Endothelial cell of umbilical vein (primary cell): ENCODE measurements at regions of chr10 and their contacts with region 1.

Region 1: DNA sequence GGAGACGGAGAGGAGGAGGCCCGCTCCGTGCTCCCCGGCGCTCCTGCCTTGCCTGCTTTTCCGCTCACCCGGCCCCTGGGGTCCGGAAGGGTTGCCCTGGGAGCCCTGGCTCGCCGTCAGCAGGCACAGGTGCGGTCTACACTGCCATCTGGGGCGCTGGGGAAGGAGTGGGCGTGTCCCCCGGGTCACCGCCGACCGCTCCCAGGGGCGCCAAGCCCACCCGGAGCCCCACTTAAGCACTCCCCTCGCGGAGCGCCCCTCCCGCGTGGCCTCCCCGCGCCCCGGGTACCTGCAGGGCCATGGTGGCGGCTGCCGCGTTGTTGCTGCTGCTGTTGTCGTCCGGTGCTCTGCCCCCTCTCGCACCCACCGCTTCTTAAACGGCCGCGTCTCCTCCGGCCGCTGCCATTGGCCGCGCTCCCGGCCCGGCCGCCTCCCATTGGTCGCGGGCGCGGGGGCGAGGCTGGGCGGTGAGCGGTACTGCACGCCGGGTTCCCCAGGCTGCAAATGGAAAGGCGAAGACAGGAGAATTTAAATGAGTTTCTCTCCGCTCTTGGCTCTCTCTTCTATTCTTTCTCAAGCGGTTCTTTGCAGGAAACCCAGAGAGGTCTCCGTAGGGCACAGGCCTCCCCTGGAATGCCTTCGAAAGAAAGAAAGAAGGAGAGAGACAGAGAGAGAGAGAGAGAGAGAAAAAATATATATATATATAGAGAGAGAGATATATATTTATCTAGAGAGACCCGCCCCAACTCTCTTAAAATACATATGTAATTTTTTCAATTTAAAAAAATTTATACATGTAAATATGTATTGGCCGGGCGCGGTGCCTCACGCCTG is at the start of gene ACBD7:
- DNase-seq: peak; percentile 86
- H3K4me3 ChIP-seq: peak within 1 kb of the TSS; percentile 49 to 62 (median 57)
- H3K27ac ChIP-seq: no peak within 1 kb of the TSS
- H3K4me1 ChIP-seq: peaks cover 12% of the 10 kb centered on the region
- H3K27me3 ChIP-seq: no peaks in the 10 kb centered on the region
- CTCF ChIP-seq: peak in 1 of 2 donors; percentile 31
- POLR2A ChIP-seq: no peak
- total RNA-seq, gene ACBD7: 1.7 and 2.8 TPM in 2 replicates

Region 2: GRCh38 chr10:14486777-14487487 is 601.7 kb before region 1 on chr10:
- CTCF ChIA-PET with region 1: no interaction called
- POLR2A ChIA-PET with region 1: no interaction called
- dilution Hi-C with region 1: no loop called
- intact Hi-C with region 1: loop called (anchors 10 kb)
- DNase-seq: no peak
- H3K4me3 ChIP-seq: no peak overlapping the region
- H3K27ac ChIP-seq: no peak overlapping the region
- H3K4me1 ChIP-seq: peaks cover under 1% of the 10 kb centered on the region
- H3K27me3 ChIP-seq: peaks cover 8 to 29% of the 10 kb centered on the region in 2 experiments
- CTCF ChIP-seq: no peak
- POLR2A ChIP-seq: no peak

Region 3: GRCh38 chr10:14954001-14954770 is 134.5 kb before region 1 on chr10 and contains the start of gene DCLRE1C:
- CTCF ChIA-PET with region 1: interaction called, 10 read pairs
- POLR2A ChIA-PET with region 1: no interaction called
- dilution Hi-C with region 1: no loop called
- intact Hi-C with region 1: loop called (anchors 1 kb)
- DNase-seq: peak; percentile 87
- H3K4me3 ChIP-seq: peak within 1 kb of the TSS; percentile 48 to 73 (median 69)
- H3K27ac ChIP-seq: peak within 1 kb of the TSS; percentile 79
- H3K4me1 ChIP-seq: peaks cover 18% of the 10 kb centered on the region
- H3K27me3 ChIP-seq: no peaks in the 10 kb centered on the region
- CTCF ChIP-seq: no peak
- POLR2A ChIP-seq: peak; percentile 71
- total RNA-seq, gene DCLRE1C: 11.0 and 15.8 TPM in 2 replicates

Region 4: DNA sequence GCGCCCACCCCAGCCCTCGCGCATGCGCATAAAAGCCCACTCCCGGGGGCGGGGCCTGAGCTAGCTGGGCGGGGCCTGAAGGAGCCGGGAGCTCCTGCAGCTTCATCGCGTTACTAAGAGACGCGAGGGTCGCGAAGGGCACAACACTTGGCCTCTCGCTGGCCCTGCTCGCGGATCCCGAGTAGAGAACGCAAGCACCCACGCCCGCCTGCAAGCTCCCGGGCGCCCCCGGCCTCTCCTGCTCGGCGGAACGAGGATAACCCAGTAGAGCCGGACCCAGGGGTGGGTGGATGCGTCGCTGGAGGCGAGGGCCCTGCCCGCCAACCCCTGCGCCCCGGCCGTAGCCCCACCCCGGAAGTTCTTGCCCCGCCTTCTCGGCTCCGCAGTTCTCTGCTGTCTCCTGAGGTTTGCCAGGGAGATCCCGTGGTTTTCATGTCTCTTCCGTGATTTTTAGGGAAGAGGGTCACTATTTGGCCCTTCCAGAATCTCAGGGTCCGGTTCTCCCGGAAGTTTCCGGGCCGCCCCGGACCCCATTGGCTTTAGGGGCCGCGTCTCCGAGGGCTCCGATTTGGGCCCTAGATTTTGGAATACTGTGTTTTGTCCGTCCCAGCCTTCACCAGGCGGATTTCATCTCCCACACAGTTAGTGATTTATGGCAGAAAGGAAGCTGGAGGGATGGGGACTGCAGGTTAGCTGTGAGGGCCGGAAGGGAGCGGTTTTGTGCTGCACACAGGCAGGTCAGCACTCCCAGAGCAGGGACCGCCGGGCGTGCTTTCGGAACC is 129.2 kb before region 1 on chr10 and contains the start of gene MEIG1:
- CTCF ChIA-PET with region 1: no interaction called
- POLR2A ChIA-PET with region 1: no interaction called
- dilution Hi-C with region 1: no loop called
- intact Hi-C with region 1: loop called (anchors 1 kb)
- DNase-seq: peak; percentile 94
- H3K4me3 ChIP-seq: peak within 1 kb of the TSS; percentile 85 to 89 (median 86)
- H3K27ac ChIP-seq: peak within 1 kb of the TSS; percentile 84
- H3K4me1 ChIP-seq: peaks cover 9% of the 10 kb centered on the region
- H3K27me3 ChIP-seq: no peaks in the 10 kb centered on the region
- CTCF ChIP-seq: no peak
- POLR2A ChIP-seq: peak; percentile 44
- total RNA-seq, gene MEIG1: not detected in 2 replicates

Region 5: DNA sequence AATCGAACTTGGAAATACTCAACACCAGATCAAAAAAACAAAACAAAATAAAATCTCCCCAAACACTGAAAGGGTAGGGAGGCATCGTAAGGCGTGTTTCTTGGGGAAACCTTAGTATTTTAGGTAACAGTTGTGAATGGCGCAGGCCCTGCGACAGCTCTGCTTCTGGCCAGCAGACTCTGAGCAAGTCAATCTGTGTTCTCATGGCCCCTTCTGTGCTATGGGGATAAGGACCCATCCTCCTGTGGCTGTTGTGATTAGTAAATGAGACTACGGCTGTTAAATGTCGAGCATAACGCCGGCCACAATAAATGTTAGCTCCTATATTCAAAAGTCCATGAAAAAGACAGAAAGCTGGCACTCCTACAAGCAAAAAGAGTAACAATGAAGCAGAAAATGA is 35.5 kb after region 1 on chr10:
- CTCF ChIA-PET with region 1: no interaction called
- POLR2A ChIA-PET with region 1: no interaction called
- dilution Hi-C with region 1: no loop called
- intact Hi-C with region 1: no loop called
- DNase-seq: no peak
- H3K4me3 ChIP-seq: no peak overlapping the region
- H3K27ac ChIP-seq: no peak overlapping the region
- H3K4me1 ChIP-seq: peaks cover 4% of the 10 kb centered on the region
- H3K27me3 ChIP-seq: no peaks in the 10 kb centered on the region
- CTCF ChIP-seq: no peak
- POLR2A ChIP-seq: no peak

Region 6: GRCh38 chr10:15209827-15210509 is 121.3 kb after region 1 on chr10:
- CTCF ChIA-PET with region 1: no interaction called
- POLR2A ChIA-PET with region 1: no interaction called
- dilution Hi-C with region 1: no loop called
- intact Hi-C with region 1: no loop called
- DNase-seq: peak; percentile 72
- H3K4me3 ChIP-seq: no peak overlapping the region
- H3K27ac ChIP-seq: no peak overlapping the region
- H3K4me1 ChIP-seq: peaks cover 11% of the 10 kb centered on the region
- H3K27me3 ChIP-seq: no peaks in the 10 kb centered on the region
- CTCF ChIP-seq: peak; percentile 85 to 86
- POLR2A ChIP-seq: no peak